Endothelial cell of umbilical vein (primary cell): ENCODE measurements at regions of chr22 and their contacts with region 1.

Region 1: DNA sequence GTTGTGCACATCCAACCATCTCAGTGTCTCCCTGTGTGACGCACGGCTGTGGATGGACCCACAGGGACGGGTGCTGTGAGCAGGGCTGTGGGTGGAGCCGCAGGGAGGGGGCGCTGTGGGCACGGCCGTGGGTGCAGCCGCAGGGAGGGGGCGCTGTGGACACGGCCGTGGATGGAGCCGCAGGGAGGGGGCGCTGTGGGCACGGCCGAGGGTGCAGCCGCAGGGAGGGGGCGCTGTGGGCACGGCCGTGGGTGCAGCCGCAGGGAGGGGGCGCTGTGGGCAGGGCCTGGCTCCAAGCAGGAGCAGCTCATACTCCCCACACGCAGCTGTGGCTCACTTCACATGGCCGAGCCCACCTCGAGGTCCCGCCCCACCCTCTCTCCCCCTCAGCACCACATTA is 6.0 kb upstream of the MAPK11 start:
- DNase-seq: peak; percentile 43
- H3K4me3 ChIP-seq: no peak overlapping the region
- H3K27ac ChIP-seq: no peak overlapping the region
- H3K4me1 ChIP-seq: peaks cover 6% of the 10 kb centered on the region
- H3K27me3 ChIP-seq: no peaks in the 10 kb centered on the region
- CTCF ChIP-seq: peak; percentile 38 to 50
- POLR2A ChIP-seq: no peak

Region 2: DNA sequence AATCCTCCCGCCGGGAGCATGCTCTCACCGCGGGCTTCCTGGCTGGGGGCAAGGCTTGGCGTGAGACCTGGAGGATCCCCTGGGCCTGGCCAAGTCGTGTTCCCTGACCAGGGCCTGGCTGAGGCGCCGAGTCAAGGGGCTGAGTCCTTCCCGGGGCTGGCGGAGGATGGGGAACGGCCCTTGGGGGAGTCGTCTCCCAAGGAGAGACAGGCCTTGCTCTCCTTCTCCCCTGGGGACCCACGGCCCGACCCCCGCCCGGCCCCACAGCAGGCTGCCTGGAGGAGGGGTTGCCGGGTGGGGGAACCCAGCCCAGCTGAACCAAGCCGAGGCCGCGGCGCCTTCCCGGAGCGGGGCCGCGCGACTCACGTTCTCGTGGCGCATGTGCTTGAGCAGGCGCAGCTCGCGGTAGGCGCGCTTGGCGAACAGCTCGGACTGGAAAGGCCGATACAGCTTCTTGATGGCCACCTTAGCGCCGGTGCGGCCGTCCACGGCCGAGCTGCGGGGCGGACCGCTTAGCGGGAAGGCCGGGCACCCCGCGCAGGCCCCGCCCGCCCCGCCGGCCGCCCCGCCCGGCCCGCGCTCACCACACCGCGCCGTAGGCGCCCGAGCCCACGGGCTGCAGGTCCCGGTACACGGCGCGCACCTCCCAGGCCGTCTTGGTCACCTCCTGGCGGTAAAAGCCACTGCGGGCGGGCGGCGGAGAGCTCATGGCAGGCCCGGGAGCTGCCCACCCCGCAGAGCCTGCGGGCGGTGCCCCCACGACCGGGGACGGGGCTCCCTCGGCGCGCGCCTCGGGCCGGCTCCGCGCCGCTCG is 15.1 kb before region 1 on chr22:
- CTCF ChIA-PET with region 1: interaction called, 13 read pairs
- POLR2A ChIA-PET with region 1: interaction called, 3 read pairs
- dilution Hi-C with region 1: no loop called
- intact Hi-C with region 1: no loop called
- DNase-seq: peak; percentile 54
- H3K4me3 ChIP-seq: peak overlapping the region; percentile 23 to 69 (median 49)
- H3K27ac ChIP-seq: peak overlapping the region; percentile 22
- H3K4me1 ChIP-seq: peaks cover 11% of the 10 kb centered on the region
- H3K27me3 ChIP-seq: no peaks in the 10 kb centered on the region
- CTCF ChIP-seq: no peak
- POLR2A ChIP-seq: no peak

Region 3: GRCh38 chr22:50293441-50294318 is 17.5 kb after region 1 on chr22:
- CTCF ChIA-PET with region 1: interaction called, 23 read pairs
- POLR2A ChIA-PET with region 1: no interaction called
- dilution Hi-C with region 1: no loop called
- intact Hi-C with region 1: no loop called
- DNase-seq: peak; percentile 83
- H3K4me3 ChIP-seq: peak overlapping the region in 2 of 3 experiments; percentile 6 to 22
- H3K27ac ChIP-seq: peak overlapping the region; percentile 92
- H3K4me1 ChIP-seq: peaks cover 20% of the 10 kb centered on the region
- H3K27me3 ChIP-seq: no peaks in the 10 kb centered on the region
- CTCF ChIP-seq: peak in 1 of 2 donors; percentile 1
- POLR2A ChIP-seq: peak; percentile 9

Region 4: GRCh38 chr22:50326959-50327710 is 51.0 kb after region 1 on chr22 and contains the start of gene DENND6B:
- CTCF ChIA-PET with region 1: interaction called, 36 read pairs
- POLR2A ChIA-PET with region 1: no interaction called
- dilution Hi-C with region 1: no loop called
- intact Hi-C with region 1: loop called (anchors 1 kb)
- DNase-seq: peak; percentile 64
- H3K4me3 ChIP-seq: peak within 1 kb of the TSS; percentile 16 to 58 (median 56)
- H3K27ac ChIP-seq: peak within 1 kb of the TSS; percentile 70
- H3K4me1 ChIP-seq: peaks cover 9% of the 10 kb centered on the region
- H3K27me3 ChIP-seq: no peaks in the 10 kb centered on the region
- CTCF ChIP-seq: peak; percentile 33 to 68
- POLR2A ChIP-seq: peak; percentile 89
- total RNA-seq, gene DENND6B: 2.9 and 5.9 TPM in 2 replicates